Ovary (tissue), 10 donors: ENCODE measurements at regions of chr12 and their contacts with region 1.

Region 1: GRCh38 chr12:57106021-57106708 is 5.0 kb downstream of the STAT6 start:
- DNase-seq: peak in 1 of 5 donors; percentile 22
- H3K4me3 ChIP-seq: no peak overlapping the region
- H3K27ac ChIP-seq: no peak overlapping the region
- H3K4me1 ChIP-seq: peaks cover 2% of the 10 kb centered on the region
- H3K27me3 ChIP-seq: no peaks in the 10 kb centered on the region
- CTCF ChIP-seq: no peak
- EP300 ChIP-seq: no peak
- POLR2A ChIP-seq: no peak

Region 2: GRCh38 chr12:57088459-57089248 is 17.5 kb before region 1 on chr12 and contains the start of gene NAB2:
- intact Hi-C with region 1: loop called in 2 of 4 experiments (anchors 2 kb)
- DNase-seq: peak; percentile 92 to 96 (median 95)
- H3K4me3 ChIP-seq: peak within 1 kb of the TSS; percentile 67
- H3K27ac ChIP-seq: peak within 1 kb of the TSS; percentile 93 to 99
- H3K4me1 ChIP-seq: peaks cover 20% of the 10 kb centered on the region
- H3K27me3 ChIP-seq: no peaks in the 10 kb centered on the region
- CTCF ChIP-seq: peak in 1 of 3 donors; percentile 9
- EP300 ChIP-seq: peak; percentile 60
- POLR2A ChIP-seq: peak; percentile 88
- total RNA-seq, gene NAB2: 37.6 to 103 (median 70.8) TPM

Region 3: GRCh38 chr12:57182921-57183790 is 77.0 kb after region 1 on chr12:
- intact Hi-C with region 1: no loop called
- DNase-seq: peak; percentile 67 to 87 (median 83)
- H3K4me3 ChIP-seq: no peak overlapping the region
- H3K27ac ChIP-seq: no peak overlapping the region
- H3K4me1 ChIP-seq: no peaks in the 10 kb centered on the region
- H3K27me3 ChIP-seq: no peaks in the 10 kb centered on the region
- CTCF ChIP-seq: peak; percentile 58 to 92 (median 91)
- EP300 ChIP-seq: no peak
- POLR2A ChIP-seq: peak; percentile 13